Cardiac septum (tissue), 1 donor: ENCODE measurements at regions of chr4 and their contacts with region 1.

Region 1: GRCh38 chr4:132646186-132646585 is 502.9 kb upstream of the PCDH10 start:
- DNase-seq: no peak

Region 2: GRCh38 chr4:132683957-132684356 is 37.8 kb after region 1 on chr4:
- intact Hi-C with region 1: no loop called
- DNase-seq: no peak

Region 3: DNA sequence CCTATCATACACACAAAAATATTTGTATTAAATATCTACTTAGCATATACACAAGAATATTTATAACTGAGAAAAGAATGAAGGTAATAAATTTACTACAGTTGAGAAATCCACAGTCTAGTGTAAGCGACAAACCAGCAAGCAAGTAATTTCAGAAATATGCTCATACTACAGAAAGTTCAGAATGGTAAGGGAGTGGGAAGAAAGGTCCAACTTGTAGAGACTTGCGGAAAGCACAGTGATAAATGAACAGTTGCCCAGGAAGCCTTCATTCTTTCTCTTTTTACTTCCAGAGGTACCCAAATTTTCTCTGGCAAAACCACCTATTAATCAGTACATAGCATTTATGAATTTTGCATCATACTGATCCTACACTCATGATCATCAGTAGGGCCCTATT is 64.8 kb after region 1 on chr4:
- intact Hi-C with region 1: loop called (anchors 2 kb)
- DNase-seq: no peak